HCT116 (cell line): ENCODE measurements at regions of chr10 and their contacts with region 1.

Region 1: GRCh38 chr10:14837757-14838581 is at the starts of genes CDNF, HSPA14 and MSANTD7:
- DNase-seq: peak; percentile 98
- ATAC-seq: peak; percentile 94
- H3K4me3 ChIP-seq: peak within 1 kb of the TSS; percentile 84 to 93
- H3K27ac ChIP-seq: peak within 1 kb of the TSS; percentile 83
- H3K4me1 ChIP-seq: peaks cover 2 to 20% of the 10 kb centered on the region in 2 experiments; a peak in 3 of 4 replicates
- H3K27me3 ChIP-seq: no peaks in the 10 kb centered on the region
- CTCF ChIP-seq: no peak
- POLR2A ChIP-seq: peak; percentile 75
- RAD21 ChIP-seq: no peak
- total RNA-seq, gene CDNF: 1.1 TPM
- total RNA-seq, gene HSPA14: 19.9 TPM
- total RNA-seq, gene MSANTD7: 14.3 TPM

Region 2: DNA sequence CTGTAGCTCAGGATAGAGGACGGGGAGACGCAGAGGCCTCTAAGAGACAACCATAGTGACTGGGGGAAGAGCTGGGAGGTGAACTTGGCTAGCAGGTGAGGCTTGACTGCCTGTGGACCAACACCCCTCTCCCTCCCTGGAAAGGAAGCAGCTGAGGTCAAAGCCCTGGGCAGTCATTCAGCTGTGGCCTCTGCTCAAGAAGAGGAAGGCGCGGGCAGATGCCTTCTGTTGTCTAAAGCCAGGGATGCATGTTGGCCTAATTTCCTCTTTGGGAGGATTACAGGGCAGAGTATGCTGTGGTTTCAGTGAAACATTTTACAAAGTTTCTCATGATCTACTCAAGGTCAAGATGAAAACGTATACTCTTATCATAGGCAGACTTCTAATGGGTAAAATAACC is 924.1 kb before region 1 on chr10:
- CTCF ChIA-PET with region 1: no interaction called
- POLR2A ChIA-PET with region 1: no interaction called
- RAD21 ChIA-PET with region 1: no interaction called
- intact Hi-C with region 1: no loop called
- DNase-seq: no peak
- ATAC-seq: no peak
- H3K4me3 ChIP-seq: no peak overlapping the region
- H3K27ac ChIP-seq: no peak overlapping the region
- H3K4me1 ChIP-seq: no peaks in the 10 kb centered on the region
- H3K27me3 ChIP-seq: peaks cover 7% of the 10 kb centered on the region
- CTCF ChIP-seq: no peak
- POLR2A ChIP-seq: no peak
- RAD21 ChIP-seq: no peak

Region 3: DNA sequence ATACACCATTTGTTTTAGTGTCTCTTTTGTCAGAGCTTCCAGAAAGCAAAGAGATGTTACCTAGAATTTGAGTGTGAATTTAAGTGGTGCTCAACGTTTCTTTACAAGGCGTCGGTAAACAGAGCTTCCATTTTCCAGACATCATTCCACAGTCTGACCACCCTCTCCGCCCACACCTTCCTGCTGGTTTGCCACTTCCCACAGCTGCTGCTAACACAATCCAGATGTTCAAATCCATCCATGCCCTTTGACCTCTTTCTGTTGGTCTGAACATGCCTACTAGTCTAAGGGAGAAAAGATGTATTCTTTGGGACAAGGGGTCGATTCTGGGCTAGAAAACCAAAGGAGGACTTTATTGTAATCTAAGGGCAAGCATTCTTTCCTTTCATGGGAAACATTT is 149.4 kb before region 1 on chr10:
- CTCF ChIA-PET with region 1: no interaction called
- POLR2A ChIA-PET with region 1: no interaction called
- RAD21 ChIA-PET with region 1: no interaction called
- intact Hi-C with region 1: no loop called
- DNase-seq: no peak
- ATAC-seq: no peak
- H3K4me3 ChIP-seq: no peak overlapping the region
- H3K27ac ChIP-seq: no peak overlapping the region
- H3K4me1 ChIP-seq: no peaks in the 10 kb centered on the region
- H3K27me3 ChIP-seq: no peaks in the 10 kb centered on the region
- CTCF ChIP-seq: no peak
- POLR2A ChIP-seq: no peak
- RAD21 ChIP-seq: no peak

Region 4: DNA sequence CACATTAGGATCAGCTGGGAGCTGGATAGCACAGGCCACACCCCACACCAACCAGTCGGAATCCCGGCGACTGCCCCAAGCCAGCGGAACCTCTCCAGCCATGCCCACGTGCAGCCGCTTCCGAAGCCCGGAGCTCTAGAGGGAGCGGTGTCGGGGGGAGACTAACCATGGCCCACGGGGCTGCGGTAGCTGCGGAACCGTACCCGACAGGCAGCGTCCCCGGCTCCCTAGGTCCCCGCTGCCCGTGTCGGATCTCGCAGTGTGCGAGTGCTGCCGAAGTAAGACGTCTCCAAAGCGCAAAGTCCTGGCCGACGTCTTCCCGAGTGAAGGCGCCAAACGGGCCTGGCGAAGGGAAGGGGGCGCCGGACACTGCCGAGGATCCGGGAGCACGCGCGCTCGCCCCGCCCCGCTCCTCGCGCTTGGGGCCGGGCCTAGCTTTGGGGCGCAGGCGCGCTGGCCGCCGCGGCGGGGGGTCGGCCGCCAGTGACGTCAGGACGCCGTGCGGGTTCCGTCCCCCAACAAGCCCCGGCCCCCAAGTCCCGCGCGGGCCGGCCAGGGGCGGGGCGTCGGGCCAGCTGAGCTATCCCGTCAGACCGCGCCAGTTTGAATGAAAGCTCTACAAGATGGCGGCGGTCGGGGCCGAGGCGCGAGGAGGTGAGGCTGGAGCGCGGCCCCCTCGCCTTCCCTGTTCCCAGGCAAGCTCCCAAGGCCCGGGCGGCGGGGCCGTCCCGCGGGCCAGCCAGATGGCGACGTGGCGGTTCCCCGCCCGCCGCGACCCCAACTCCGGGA is 40.5 kb after region 1 on chr10 and contains the start of gene SUV39H2:
- CTCF ChIA-PET with region 1: no interaction called
- POLR2A ChIA-PET with region 1: interaction called, 14 read pairs
- RAD21 ChIA-PET with region 1: no interaction called
- intact Hi-C with region 1: loop called (anchors 5 kb)
- DNase-seq: peak; percentile 80
- ATAC-seq: peak; percentile 88
- H3K4me3 ChIP-seq: peak within 1 kb of the TSS; percentile 76 to 88
- H3K27ac ChIP-seq: peak within 1 kb of the TSS; percentile 97
- H3K4me1 ChIP-seq: peaks cover 9 to 19% of the 10 kb centered on the region in 2 experiments
- H3K27me3 ChIP-seq: no peaks in the 10 kb centered on the region
- CTCF ChIP-seq: no peak
- POLR2A ChIP-seq: peak; percentile 79
- RAD21 ChIP-seq: no peak
- total RNA-seq, gene SUV39H2: 26.6 TPM